SK-N-SH (cell line): ENCODE measurements at regions of chr7 and their contacts with region 1.

Region 1: GRCh38 chr7:92421676-92422435 is 25.4 kb upstream of the GATAD1 start:
- DNase-seq: peak; percentile 40
- H3K4me3 ChIP-seq: no peak overlapping the region
- H3K27ac ChIP-seq: no peak overlapping the region
- H3K4me1 ChIP-seq: peaks cover 0 to 3% of the 10 kb centered on the region in 2 experiments; a peak in 1 of 4 replicates
- H3K27me3 ChIP-seq: no peaks in the 10 kb centered on the region
- CTCF ChIP-seq: no peak
- EP300 ChIP-seq: no peak
- RAD21 ChIP-seq: no peak

Region 2: GRCh38 chr7:92141161-92141560 is 280.7 kb before region 1 on chr7:
- CTCF ChIA-PET with region 1: no interaction called
- POLR2A ChIA-PET with region 1: no interaction called
- DNase-seq: no peak
- H3K4me3 ChIP-seq: no peak overlapping the region
- H3K27ac ChIP-seq: no peak overlapping the region
- H3K4me1 ChIP-seq: peaks cover 0 to 4% of the 10 kb centered on the region in 2 experiments; a peak in 1 of 4 replicates
- H3K27me3 ChIP-seq: no peaks in the 10 kb centered on the region
- CTCF ChIP-seq: no peak
- EP300 ChIP-seq: no peak
- RAD21 ChIP-seq: no peak

Region 3: DNA sequence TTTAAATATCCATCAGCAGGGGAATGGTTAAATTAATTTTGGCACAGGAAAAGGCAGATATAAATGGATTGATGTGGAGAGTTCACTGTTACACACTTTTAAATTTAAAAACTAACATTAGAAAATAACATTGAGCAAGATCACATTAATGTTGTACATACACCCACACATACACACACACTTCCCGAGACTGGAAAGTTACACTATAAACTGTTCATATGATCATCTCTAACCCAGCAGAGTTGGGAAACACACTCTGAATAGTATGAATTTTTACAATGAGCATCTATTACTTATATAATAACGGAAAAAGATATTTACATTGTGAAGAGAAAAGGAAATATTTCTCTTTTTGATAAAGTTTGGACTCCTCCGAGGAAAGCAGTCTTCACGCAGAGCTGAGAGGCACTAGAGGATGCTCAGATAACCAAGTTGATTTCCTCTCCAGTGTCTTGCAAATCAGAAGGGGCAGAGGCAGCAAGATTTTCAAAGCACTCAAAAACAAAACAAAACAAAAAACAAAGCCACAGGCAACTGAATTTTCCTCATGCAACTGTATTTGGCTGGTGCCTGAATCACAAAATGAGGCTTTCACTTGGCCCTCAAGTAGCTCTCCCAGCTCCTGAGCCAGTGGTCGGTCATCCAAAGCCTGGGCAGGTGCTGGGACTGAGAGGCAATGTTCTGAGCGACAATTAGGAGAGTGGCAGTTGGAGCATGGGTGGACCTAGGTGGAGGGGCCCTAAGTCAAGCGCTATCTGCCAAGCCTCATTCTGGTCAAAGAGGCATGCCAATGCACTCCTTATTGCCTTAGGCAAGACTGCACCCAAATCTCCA is 15.0 kb after region 1 on chr7:
- CTCF ChIA-PET with region 1: interaction called, 17 read pairs
- POLR2A ChIA-PET with region 1: no interaction called
- DNase-seq: no peak
- H3K4me3 ChIP-seq: no peak overlapping the region
- H3K27ac ChIP-seq: no peak overlapping the region
- H3K4me1 ChIP-seq: peaks cover 0 to 2% of the 10 kb centered on the region in 2 experiments; a peak in 1 of 4 replicates
- H3K27me3 ChIP-seq: no peaks in the 10 kb centered on the region; the same call in 1 of the 2 replicates
- CTCF ChIP-seq: no peak
- EP300 ChIP-seq: no peak
- RAD21 ChIP-seq: no peak

Region 4: DNA sequence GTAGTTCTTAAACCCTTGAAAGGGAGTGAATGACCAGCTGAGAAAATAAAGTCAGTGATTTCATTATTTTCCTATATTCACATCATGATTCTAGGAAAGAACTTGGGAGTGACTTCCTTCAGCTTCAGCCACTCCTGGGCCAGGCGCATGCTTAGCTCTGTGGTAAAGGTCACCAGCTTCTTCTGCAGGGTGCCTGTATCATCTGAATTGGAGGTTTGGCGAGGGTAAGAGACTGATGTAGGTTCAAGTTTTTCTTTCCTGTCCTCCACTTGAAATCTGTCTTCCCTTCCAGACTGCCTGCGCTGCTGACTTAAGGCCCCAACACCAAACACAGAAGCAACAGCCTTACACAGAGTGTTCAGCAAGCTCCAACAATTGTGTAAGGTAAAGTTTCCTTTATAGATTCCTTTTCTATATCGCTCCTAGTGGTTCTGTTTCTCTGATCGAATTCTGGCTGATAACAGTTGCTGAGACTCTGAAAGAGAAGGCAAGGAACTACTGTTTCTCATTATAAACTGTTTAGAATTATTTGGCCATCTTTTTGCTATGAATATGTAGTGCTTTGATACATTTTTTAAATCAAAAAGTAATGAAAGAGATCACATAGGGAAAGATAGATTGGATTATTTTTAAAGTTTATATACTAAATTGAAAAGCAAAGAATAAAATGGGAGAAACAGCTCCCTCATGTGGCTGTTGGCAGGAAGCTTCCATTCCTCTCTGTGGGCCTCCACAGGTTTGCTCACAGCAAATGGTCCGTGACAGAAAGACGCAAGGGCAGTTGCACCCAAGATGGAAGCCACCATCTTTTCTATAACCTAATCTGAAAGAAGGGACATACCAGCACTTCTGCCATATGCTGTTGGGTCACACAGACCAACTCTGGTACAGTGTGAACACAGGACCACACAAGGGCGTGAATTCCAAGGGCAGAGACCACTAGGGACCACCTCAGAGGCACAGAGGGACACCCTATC is 39.5 kb after region 1 on chr7:
- CTCF ChIA-PET with region 1: interaction called, 13 read pairs
- POLR2A ChIA-PET with region 1: no interaction called
- DNase-seq: peak; percentile 68
- H3K4me3 ChIP-seq: no peak overlapping the region; a peak in 1 of 4 replicates
- H3K27ac ChIP-seq: no peak overlapping the region
- H3K4me1 ChIP-seq: peaks cover 0 to 4% of the 10 kb centered on the region in 2 experiments; a peak in 2 of 4 replicates
- H3K27me3 ChIP-seq: no peaks in the 10 kb centered on the region
- CTCF ChIP-seq: peak; percentile 98
- EP300 ChIP-seq: no peak
- RAD21 ChIP-seq: peak; percentile 74

Region 5: GRCh38 chr7:92595281-92595680 is 173.4 kb after region 1 on chr7:
- CTCF ChIA-PET with region 1: no interaction called
- POLR2A ChIA-PET with region 1: no interaction called
- DNase-seq: no peak
- H3K4me3 ChIP-seq: no peak overlapping the region
- H3K27ac ChIP-seq: peak overlapping the region in 1 of 2 experiments; percentile 66; a peak in 2 of 4 replicates
- H3K4me1 ChIP-seq: peaks cover 3 to 8% of the 10 kb centered on the region in 2 experiments; a peak in 2 of 4 replicates
- H3K27me3 ChIP-seq: no peaks in the 10 kb centered on the region
- CTCF ChIP-seq: no peak
- EP300 ChIP-seq: no peak
- RAD21 ChIP-seq: no peak